ENCODE measurements at regions of chr12 and their contacts with region 1.

Region 1: GRCh38 chr12:29782285-29782870 is 1.4 kb downstream of the TMTC1 start:
- DNase-seq: peak; percentile 11
- H3K4me3 ChIP-seq: peak overlapping the region; percentile 60 to 62
- H3K27ac ChIP-seq: peak overlapping the region; percentile 58 to 66
- H3K4me1 ChIP-seq: no peaks in the 10 kb centered on the region
- H3K27me3 ChIP-seq: no peaks in the 10 kb centered on the region
- CTCF ChIP-seq: no peak
- POLR2A ChIP-seq: no peak

Region 2: DNA sequence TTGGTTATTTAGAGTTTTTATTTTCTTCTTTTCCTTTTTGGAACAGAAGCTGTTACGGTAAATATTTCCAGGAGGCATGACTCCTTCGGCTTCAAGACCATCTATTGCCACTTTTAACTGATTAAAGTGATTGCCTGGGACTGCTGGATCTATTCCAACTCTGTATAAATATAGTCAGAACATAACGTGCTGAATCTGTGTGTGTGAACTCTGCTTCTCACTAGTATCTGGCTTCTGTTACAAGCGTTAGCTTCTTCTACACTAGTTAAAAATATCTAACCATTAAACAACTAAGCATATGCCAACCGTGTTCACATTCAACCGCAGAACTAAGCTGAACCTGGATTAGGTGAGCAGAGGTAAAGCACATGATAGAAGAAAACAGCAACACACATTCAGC is 47.6 kb before region 1 on chr12:
- intact Hi-C with region 1: loop called (anchors 2 kb)
- DNase-seq: no peak
- H3K4me3 ChIP-seq: no peak overlapping the region
- H3K27ac ChIP-seq: peak overlapping the region in 1 of 2 donors; percentile 11
- H3K4me1 ChIP-seq: no peaks in the 10 kb centered on the region
- H3K27me3 ChIP-seq: no peaks in the 10 kb centered on the region
- CTCF ChIP-seq: no peak
- POLR2A ChIP-seq: no peak